Heart left ventricle (tissue), 16 donors: ENCODE measurements at regions of chr13 and their contacts with region 1.

Region 1: DNA sequence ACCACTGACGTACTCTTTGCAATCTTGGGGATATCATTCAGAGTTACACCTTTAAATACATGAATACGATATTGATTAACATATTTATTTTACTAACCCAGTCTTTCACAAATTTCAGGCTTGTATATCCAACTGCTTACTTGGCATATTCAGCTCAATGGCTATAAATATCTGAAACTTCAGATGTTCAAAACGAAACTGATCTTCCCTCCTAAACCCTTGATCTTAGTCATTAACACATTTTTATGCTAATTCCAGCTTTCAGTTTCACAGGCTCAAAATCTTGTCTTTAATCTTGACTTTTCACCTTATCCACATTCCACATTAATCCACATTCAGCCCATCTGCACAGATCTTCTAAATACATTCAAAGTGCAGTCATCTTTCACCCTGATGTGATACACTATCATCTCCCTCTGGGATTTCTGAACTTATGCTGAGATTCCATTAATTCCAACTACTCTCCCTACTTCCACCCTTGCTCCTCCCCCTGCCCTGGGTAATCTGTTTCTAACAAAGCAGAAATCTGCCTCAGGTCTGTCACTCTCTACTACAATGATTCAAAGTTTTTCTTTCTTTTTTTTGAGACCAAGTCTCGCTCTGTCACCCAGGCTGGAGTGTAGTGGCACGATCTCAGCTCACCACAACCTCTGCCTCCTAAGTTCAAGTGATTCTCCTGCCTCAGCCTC is 387.2 kb downstream of the GPC5 start:
- DNase-seq: no peak
- ATAC-seq: no peak
- H3K4me3 ChIP-seq: no peak overlapping the region
- H3K27ac ChIP-seq: no peak overlapping the region
- H3K4me1 ChIP-seq: no peaks in the 10 kb centered on the region
- H3K27me3 ChIP-seq: no peaks in the 10 kb centered on the region
- CTCF ChIP-seq: no peak
- POLR2A ChIP-seq: no peak

Region 2: DNA sequence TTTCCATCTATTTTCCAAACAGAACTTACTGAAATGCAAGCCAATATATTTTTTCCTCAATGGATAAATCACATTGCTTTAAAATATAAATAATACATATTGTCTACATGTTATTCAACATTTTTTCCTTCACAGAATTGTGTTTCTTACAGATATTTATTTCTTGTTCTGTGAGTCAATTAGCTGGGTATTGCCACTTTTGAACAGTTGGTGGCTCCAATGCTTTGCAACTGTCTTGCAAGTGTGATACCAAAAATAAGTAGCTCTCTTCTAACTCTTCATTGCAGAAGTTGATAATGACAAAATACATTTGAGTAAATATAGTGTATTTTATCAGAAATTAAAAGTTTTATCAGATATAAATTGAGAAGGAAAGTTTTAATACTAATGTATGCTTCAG is 404.2 kb before region 1 on chr13:
- intact Hi-C with region 1: loop called in 3 of 10 experiments (anchors 2 to 5 kb)
- DNase-seq: no peak
- ATAC-seq: no peak
- H3K4me3 ChIP-seq: no peak overlapping the region
- H3K27ac ChIP-seq: no peak overlapping the region
- H3K4me1 ChIP-seq: no peaks in the 10 kb centered on the region
- H3K27me3 ChIP-seq: peaks cover 0 to 4% (median 0%) of the 10 kb centered on the region in 9 donors
- CTCF ChIP-seq: peak in 11 of 12 donors; percentile 22 to 50 (median 26)
- POLR2A ChIP-seq: no peak

Region 3: GRCh38 chr13:91609353-91609752 is 176.2 kb before region 1 on chr13:
- intact Hi-C with region 1: no loop called
- DNase-seq: no peak
- ATAC-seq: no peak
- H3K4me3 ChIP-seq: no peak overlapping the region
- H3K27ac ChIP-seq: no peak overlapping the region
- H3K4me1 ChIP-seq: no peaks in the 10 kb centered on the region
- H3K27me3 ChIP-seq: no peaks in the 10 kb centered on the region
- CTCF ChIP-seq: no peak
- POLR2A ChIP-seq: no peak